Heart right ventricle (tissue), 16 donors: ENCODE measurements at regions of chr4 and their contacts with region 1.

Region 1: GRCh38 chr4:1167247-1167949 is 5.0 kb downstream of the SPON2 start:
- DNase-seq: peak; percentile 76 to 83
- ATAC-seq: peak; percentile 80 to 92 (median 86)
- H3K4me3 ChIP-seq: peak overlapping the region; percentile 12 to 79 (median 62)
- H3K27ac ChIP-seq: peak overlapping the region in 2 of 10 donors; percentile 29 to 80
- H3K4me1 ChIP-seq: peaks cover 5 to 44% (median 27%) of the 10 kb centered on the region in 9 donors
- H3K27me3 ChIP-seq: peaks cover 9 to 39% (median 29%) of the 10 kb centered on the region in 7 donors
- CTCF ChIP-seq: peak; percentile 84 to 96 (median 93)

Region 2: DNA sequence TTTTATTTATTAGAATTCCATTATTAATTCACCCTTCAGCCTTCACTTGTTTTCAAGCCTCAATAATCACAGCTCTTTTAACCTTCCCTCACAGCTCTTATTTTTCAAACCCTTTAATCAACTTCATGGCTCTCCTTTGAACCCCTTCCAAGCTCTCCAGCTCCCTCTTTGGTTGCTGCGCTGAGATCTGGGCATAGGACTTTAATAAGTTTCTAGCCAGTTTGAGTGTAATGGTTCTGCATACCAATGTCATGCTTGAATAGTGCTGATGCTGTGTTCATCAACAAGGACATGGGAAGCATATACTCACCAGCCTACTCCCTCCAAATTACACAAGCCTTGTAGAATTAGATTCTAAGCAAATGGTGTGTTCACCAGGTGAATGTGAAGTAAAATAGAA is 50.6 kb before region 1 on chr4:
- intact Hi-C with region 1: no loop called
- DNase-seq: no peak
- ATAC-seq: no peak
- H3K4me3 ChIP-seq: no peak overlapping the region
- H3K27ac ChIP-seq: no peak overlapping the region
- H3K4me1 ChIP-seq: no peaks in the 10 kb centered on the region
- H3K27me3 ChIP-seq: peaks cover 9 to 47% (median 35%) of the 10 kb centered on the region in 7 donors
- CTCF ChIP-seq: no peak

Region 3: GRCh38 chr4:1192091-1192492 is 24.7 kb after region 1 on chr4:
- intact Hi-C with region 1: loop called in 1 of 10 experiments (anchors 2 kb)
- DNase-seq: peak; percentile 76 to 90
- ATAC-seq: peak; percentile 93 to 97 (median 96)
- H3K4me3 ChIP-seq: peak overlapping the region in 1 of 10 donors; percentile 2
- H3K27ac ChIP-seq: peak overlapping the region; percentile 28 to 92 (median 84)
- H3K4me1 ChIP-seq: peaks cover 15 to 40% (median 34%) of the 10 kb centered on the region in 9 donors
- H3K27me3 ChIP-seq: no peaks in the 10 kb centered on the region
- CTCF ChIP-seq: no peak

Region 4: DNA sequence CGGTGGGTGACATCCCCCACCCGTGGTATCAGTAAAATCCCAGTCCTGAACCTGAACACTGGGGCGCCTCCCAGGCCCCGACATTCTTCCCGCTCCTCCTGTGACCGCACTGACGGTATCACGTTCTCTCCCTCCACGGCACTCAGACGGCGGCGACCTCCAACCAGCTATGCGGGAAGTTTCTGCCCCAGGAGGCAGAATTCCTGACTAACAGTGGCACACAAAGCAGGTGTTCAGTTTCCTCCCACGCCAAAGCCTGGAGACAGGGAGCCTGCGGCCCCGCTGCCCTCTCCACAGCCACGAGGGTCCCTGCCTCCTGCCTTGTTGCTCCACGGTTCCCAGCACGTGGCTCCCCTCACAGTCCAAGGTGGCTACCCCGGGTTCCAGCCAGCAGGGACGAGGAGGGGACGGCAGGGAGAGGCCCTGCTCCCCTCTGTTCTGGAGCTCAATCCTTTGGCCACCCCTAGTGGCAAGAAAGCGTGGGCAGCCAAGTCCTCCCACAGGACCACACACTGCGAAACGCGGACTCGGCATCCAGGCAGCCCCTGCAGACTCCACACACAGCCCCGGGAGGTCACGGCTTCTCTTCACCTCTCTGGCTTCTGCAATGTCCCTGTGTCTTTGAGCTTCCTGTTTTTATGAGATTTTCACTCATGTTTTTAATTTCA is 66.4 kb after region 1 on chr4:
- intact Hi-C with region 1: loop called in 1 of 10 experiments (anchors 5 kb)
- DNase-seq: peak in 1 of 2 donors; percentile 30
- ATAC-seq: peak; percentile 30 to 66 (median 54)
- H3K4me3 ChIP-seq: peak overlapping the region in 1 of 10 donors; percentile 17
- H3K27ac ChIP-seq: peak overlapping the region; percentile 3 to 80 (median 68)
- H3K4me1 ChIP-seq: peaks cover 15 to 36% (median 23%) of the 10 kb centered on the region in 9 donors
- H3K27me3 ChIP-seq: no peaks in the 10 kb centered on the region
- CTCF ChIP-seq: peak in 7 of 9 donors; percentile 7 to 56 (median 37)

Region 5: DNA sequence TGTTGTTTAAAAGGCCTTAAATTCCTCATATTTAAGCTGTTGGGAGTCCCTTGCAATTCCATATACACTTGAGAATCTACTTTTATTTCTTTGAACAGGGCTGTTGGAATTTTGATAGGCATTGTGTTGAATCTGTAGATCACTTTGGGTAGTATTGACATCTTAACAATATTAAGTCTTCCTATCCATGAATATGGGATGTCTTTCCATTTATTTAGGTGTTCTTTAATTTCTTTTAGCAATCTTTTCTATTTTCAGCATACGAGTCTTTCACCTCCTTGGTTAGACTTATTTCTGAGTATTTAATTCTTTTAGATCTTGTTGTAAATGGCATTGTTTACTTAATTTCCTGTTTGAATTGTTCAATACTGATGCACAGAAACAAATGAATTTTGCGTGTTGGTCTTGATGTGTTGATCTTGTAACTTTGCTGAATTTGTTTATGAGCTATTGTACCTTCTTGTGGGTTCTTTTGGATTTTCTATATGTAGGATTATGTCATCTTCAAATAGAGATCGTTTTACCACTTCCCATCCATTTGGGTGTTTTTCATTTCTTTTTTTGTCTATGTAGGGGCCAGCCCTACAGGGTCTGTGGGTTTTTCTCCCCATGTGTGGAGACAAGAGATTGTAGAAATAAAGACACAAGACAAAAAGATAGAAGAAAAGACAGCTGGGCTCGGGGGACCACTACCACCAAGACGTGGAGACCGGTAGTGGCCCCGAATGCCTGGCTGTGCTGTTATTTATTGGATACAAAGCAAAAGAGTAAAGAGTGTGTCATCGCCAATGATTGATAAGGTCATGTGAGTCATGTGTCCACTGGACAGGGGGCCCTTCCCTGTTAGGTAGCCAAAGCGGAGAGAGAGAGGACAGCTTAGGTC is 99.7 kb after region 1 on chr4:
- intact Hi-C with region 1: loop called in 8 of 10 experiments (anchors 1 to 5 kb)
- DNase-seq: no peak
- ATAC-seq: no peak
- H3K4me3 ChIP-seq: no peak overlapping the region
- H3K27ac ChIP-seq: peak overlapping the region in 1 of 10 donors; percentile 36
- H3K4me1 ChIP-seq: peaks cover 0 to 4% (median 0%) of the 10 kb centered on the region in 9 donors
- H3K27me3 ChIP-seq: no peaks in the 10 kb centered on the region
- CTCF ChIP-seq: no peak

Region 6: DNA sequence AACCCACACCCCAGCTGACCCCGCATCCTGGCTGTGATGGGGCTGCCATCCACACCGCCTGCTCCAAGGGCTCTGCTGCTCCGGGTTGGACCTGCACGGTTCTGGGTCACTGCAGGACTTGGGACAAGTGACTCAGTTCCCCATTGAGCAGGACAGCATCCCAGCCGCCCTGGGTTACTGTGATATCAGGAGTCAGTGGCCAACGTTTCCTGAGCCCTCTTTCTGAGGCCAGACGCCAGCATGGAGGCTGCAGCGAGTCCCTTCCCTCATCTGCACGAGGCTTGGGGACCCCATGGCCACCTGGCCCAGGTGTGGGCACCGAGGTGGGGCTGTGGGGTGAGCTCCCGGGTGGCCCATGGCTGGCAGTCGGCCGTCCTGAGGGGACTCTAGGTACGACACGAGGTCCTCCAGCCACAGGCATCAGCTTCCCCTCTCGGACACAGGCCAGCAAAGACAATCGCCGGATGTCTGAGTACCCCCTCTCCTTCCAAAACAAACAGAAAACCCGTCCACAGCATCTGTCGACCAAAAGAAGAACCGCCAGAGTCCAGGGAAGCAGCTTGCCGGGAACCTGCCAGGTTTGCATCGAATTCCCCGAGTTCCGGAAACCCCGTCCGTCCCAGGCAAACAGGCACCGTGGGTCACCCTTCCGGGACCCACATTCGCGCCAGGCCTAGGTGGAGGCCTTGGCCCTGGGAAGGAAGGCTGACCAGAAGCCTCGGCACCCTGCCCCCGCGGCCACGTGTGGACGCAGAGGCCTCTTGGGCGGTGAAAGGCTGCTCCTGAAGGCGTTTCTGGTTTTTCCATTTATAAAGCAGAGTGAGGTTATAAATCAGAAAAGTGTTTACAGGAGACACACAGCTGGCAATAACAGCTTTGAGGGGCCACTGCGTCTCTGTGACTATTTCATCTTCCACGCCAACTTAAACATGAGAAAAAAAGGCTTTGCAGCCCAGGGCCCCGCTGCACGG is 380.7 kb after region 1 on chr4:
- intact Hi-C with region 1: no loop called
- DNase-seq: peak; percentile 70 to 79
- ATAC-seq: peak; percentile 72 to 93 (median 86)
- H3K4me3 ChIP-seq: peak overlapping the region in 9 of 10 donors; percentile 15 to 56 (median 31)
- H3K27ac ChIP-seq: peak overlapping the region in 9 of 10 donors; percentile 42 to 83 (median 71)
- H3K4me1 ChIP-seq: peaks cover 5 to 36% (median 13%) of the 10 kb centered on the region in 9 donors
- H3K27me3 ChIP-seq: peaks cover 0 to 36% (median under 1%) of the 10 kb centered on the region in 7 donors
- CTCF ChIP-seq: no peak